Pancreas (tissue), 10 donors: ENCODE measurements at regions of chr18 and their contacts with region 1.

Region 1: DNA sequence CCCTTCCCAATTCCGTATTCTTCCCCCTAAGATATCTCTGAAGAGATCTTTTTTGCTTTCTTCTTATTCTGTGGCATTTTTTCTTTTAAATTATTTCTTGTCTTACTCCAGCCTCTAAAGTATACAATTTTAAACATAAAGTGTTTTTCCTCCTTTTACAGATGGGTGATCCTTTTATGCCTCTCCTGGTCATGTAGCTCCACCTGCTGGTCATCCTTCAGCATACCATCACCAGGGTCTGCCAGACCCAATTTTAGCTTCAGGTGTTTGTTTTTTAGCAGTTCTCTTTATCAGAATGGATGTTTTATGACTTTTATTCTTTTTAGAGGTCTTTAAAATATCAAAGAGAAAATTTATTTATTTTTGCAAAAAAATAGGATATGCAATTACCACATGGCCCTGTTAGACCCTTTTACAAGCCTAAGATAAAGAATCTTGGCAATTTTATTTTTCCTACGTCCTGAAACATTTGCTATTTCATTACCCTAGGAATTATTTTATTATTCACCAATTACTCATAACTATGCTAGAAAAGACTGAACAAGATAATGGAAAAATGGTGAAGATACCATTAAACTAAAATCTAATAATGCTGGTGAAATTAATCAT is 55.5 kb downstream of the PIGN start:
- DNase-seq: peak in 4 of 6 donors; percentile 30 to 63 (median 42)
- ATAC-seq: peak; percentile 77 to 91 (median 86)
- H3K4me3 ChIP-seq: no peak overlapping the region
- H3K27ac ChIP-seq: no peak overlapping the region
- H3K4me1 ChIP-seq: no peaks in the 10 kb centered on the region
- H3K27me3 ChIP-seq: no peaks in the 10 kb centered on the region
- CTCF ChIP-seq: peak; percentile 57 to 94 (median 72)

Region 2: DNA sequence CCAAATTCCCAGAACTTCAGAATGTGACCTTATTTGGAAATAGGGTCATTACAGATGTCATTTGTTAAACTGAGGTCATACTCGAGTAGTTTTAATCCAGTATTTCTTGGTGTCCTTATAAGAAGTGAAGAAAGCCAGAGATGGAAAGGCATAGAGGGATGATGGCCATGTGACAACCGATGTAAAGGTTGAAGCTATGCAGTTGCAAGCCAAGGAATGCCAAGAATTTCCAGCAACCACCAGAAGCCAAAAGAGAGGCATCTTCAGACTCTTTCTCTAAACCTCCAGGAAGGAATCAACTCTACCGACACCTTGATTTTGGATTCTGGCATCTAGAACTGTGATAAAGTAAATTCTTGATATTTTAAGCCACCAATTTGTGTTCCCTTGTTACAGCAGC is 556.0 kb before region 1 on chr18:
- intact Hi-C with region 1: loop called in 1 of 3 experiments (anchors 10 kb)
- DNase-seq: no peak
- ATAC-seq: no peak
- H3K4me3 ChIP-seq: no peak overlapping the region
- H3K27ac ChIP-seq: no peak overlapping the region
- H3K4me1 ChIP-seq: no peaks in the 10 kb centered on the region
- H3K27me3 ChIP-seq: no peaks in the 10 kb centered on the region
- CTCF ChIP-seq: no peak

Region 3: DNA sequence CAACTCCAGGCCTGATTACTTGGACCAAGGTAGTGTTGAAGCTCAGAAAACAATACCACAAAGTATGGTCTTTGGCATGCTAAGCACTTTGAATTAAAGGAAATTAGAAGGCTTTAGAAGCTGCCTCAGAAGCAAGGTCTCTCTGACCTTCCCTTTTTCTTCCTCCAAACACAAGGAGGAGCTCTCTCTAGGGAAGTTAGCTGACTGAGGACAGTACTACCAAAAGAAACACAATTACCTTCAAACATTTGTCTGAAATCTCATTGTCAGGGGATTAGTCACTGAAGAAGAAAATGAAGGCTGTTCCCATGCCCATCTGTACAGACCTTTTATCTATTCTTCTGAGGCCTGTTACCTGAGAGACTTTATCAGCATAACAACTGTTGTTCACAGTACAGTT is 518.9 kb before region 1 on chr18:
- intact Hi-C with region 1: loop called in 1 of 3 experiments (anchors 10 kb)
- DNase-seq: no peak
- ATAC-seq: no peak
- H3K4me3 ChIP-seq: no peak overlapping the region
- H3K27ac ChIP-seq: no peak overlapping the region
- H3K4me1 ChIP-seq: no peaks in the 10 kb centered on the region
- H3K27me3 ChIP-seq: no peaks in the 10 kb centered on the region
- CTCF ChIP-seq: no peak

Region 4: DNA sequence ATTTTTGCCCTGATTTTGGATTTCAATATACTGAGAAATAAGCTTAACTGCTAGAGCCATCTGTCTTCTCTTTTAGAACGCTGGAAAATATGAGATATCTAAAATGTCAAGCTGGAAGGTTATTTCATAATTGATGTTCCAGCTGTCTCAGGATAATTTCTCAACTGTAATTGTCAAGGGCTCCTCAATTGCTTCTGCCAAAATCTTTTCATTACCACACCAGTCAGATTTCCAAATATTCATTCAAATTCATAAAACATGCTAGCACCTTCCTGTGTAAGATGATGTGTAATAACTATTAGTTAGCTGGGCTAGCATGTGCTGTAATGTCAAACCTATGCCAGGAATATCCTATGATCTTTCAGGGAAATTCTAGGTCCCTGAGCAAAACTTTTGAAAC is 281.8 kb after region 1 on chr18:
- intact Hi-C with region 1: no loop called
- DNase-seq: no peak
- ATAC-seq: no peak
- H3K4me3 ChIP-seq: no peak overlapping the region
- H3K27ac ChIP-seq: no peak overlapping the region
- H3K4me1 ChIP-seq: no peaks in the 10 kb centered on the region
- H3K27me3 ChIP-seq: no peaks in the 10 kb centered on the region
- CTCF ChIP-seq: no peak